GM12878 (cell line): ENCODE measurements at regions of chr2 and their contacts with region 1.

Region 1: DNA sequence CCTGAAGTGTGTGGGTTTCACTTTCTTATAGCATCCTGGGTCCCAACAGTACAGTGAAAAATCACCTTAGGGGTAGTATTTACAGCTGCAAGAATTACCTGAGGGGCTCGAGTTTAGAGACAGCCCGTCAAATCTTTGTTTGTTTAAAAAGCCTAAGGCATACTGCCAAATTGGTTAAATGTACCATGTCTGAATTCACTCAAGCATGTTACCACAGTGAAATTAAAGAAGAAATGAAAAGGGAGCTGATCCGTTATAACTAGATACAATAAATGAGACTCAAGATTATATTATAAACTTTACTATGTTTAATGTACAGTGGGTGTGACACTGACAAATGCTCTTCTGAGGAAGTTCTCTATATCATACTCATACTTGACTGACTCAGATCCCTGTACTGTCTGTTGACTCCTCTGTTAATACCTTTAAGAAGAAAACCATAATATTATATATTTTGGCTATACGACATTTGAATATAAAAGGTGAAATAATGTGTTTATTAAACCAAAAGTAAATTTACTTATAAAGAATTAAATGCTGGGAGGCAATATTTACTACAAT is 107.3 kb downstream of the TMEFF2 start:
- DNase-seq: no peak
- ATAC-seq: peak; percentile 45; the same call in 2 of the 3 replicates
- H3K4me3 ChIP-seq: no peak overlapping the region
- H3K27ac ChIP-seq: no peak overlapping the region
- H3K4me1 ChIP-seq: no peaks in the 10 kb centered on the region
- H3K27me3 ChIP-seq: no peaks in the 10 kb centered on the region
- CTCF ChIP-seq: no peak
- EP300 ChIP-seq: no peak
- POLR2A ChIP-seq: no peak
- RAD21 ChIP-seq: no peak

Region 2: GRCh38 chr2:192098814-192099491 is 11.5 kb after region 1 on chr2:
- CTCF ChIA-PET with region 1: interaction called, 3 read pairs
- POLR2A ChIA-PET with region 1: no interaction called
- RAD21 ChIA-PET with region 1: no interaction called
- SMC1A ChIA-PET with region 1: interaction called, 18 read pairs
- in situ Hi-C with region 1: no loop called
- intact Hi-C with region 1: no loop called
- DNase-seq: no peak
- ATAC-seq: peak; percentile 48
- H3K4me3 ChIP-seq: no peak overlapping the region
- H3K27ac ChIP-seq: no peak overlapping the region
- H3K4me1 ChIP-seq: no peaks in the 10 kb centered on the region; the same call in 1 of the 2 replicates
- H3K27me3 ChIP-seq: peaks cover 0 to 4% of the 10 kb centered on the region in 2 experiments; a peak in 1 of 4 replicates
- CTCF ChIP-seq: no peak
- EP300 ChIP-seq: no peak
- POLR2A ChIP-seq: no peak
- RAD21 ChIP-seq: no peak